Activated CD8-positive, alpha-beta T cell treated with anti-CD3 and anti-CD28 coated beads for 36 hours (primary cell): ENCODE measurements at regions of chr19 and their contacts with region 1.

Region 1: DNA sequence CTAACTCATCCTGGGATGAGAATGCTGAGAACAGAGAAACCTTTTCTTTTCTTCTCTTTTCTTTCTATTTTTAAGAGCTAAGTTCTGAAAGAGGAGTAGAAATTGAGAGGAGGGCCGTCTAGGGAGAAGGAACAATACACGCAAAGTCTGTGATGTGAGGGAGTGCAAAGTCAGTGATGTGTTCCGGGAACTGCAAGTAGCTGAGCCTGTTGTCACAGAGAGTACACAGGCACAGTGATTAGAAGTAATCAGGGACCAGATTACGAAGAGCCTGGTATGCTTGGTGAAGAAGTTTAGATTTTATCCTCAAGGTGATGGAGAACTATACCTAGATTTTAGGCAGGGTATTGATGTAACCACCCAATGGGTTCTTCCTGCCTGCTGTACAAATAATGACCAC is 32.0 kb upstream of the CXCL17 start:
- DNase-seq: no peak
- ATAC-seq: no peak
- H3K4me3 Mint-ChIP-seq: no peak overlapping the region
- H3K27ac Mint-ChIP-seq: no peak overlapping the region
- H3K4me1 Mint-ChIP-seq: peaks cover 3% of the 10 kb centered on the region
- H3K27me3 Mint-ChIP-seq: peaks cover 2% of the 10 kb centered on the region
- CTCF ChIP-seq: no peak

Region 2: DNA sequence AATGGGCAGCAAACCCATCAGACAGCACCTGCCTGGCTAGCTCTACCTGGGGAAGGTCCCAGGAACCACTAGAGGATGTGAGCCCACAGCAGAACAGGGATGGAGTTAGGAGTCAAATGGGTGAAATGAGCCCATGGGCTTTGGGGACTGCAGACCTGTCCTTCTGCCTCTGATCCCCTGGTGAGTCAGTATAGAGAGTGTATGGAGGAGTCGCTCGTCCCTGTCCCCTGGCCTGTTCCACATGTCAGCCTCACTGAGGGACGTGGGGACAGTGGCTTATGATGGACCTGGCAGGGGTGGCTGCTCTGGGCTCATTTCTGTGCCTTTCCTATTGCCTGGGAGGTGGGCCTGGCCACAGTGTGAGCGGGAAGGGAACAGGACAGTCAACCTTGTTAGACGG is 49.5 kb after region 1 on chr19:
- CTCF ChIA-PET with region 1: interaction called, 36 read pairs
- POLR2A ChIA-PET with region 1: no interaction called
- intact Hi-C with region 1: loop called (anchors 1 kb)
- DNase-seq: no peak
- ATAC-seq: no peak
- H3K4me3 Mint-ChIP-seq: no peak overlapping the region
- H3K27ac Mint-ChIP-seq: no peak overlapping the region
- H3K4me1 Mint-ChIP-seq: peaks cover 25% of the 10 kb centered on the region
- H3K27me3 Mint-ChIP-seq: no peaks in the 10 kb centered on the region
- CTCF ChIP-seq: no peak

Region 3: GRCh38 chr19:42540071-42540553 is 65.4 kb after region 1 on chr19:
- CTCF ChIA-PET with region 1: no interaction called
- POLR2A ChIA-PET with region 1: no interaction called
- intact Hi-C with region 1: no loop called
- DNase-seq: no peak
- ATAC-seq: no peak
- H3K4me3 Mint-ChIP-seq: no peak overlapping the region
- H3K27ac Mint-ChIP-seq: no peak overlapping the region
- H3K4me1 Mint-ChIP-seq: no peaks in the 10 kb centered on the region
- H3K27me3 Mint-ChIP-seq: peaks cover 3% of the 10 kb centered on the region
- CTCF ChIP-seq: no peak

Region 4: DNA sequence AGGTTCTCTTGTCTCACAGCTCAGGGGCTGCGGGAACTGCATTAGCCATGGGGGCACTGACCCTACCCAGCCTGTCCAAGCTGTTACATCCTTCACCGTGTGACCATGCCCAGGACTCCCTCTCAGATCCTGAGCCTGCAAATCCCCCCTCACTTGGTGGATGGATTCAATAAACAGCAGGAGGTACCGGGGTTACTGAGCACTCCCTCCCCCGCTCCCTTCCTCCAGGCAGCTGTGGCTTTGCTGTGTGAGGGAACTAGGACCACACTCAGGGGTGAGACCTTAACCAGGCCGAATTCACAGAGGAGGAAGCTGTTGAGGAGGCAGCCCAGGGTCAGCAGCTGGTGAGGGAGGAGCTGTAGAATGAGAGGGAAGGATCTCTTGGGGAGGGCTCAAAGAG is 80.6 kb after region 1 on chr19:
- CTCF ChIA-PET with region 1: no interaction called
- POLR2A ChIA-PET with region 1: no interaction called
- intact Hi-C with region 1: no loop called
- DNase-seq: no peak
- ATAC-seq: no peak
- H3K4me3 Mint-ChIP-seq: no peak overlapping the region
- H3K27ac Mint-ChIP-seq: no peak overlapping the region
- H3K4me1 Mint-ChIP-seq: no peaks in the 10 kb centered on the region
- H3K27me3 Mint-ChIP-seq: peaks cover 16% of the 10 kb centered on the region
- CTCF ChIP-seq: no peak